ENCODE measurements at regions of chrX and their contacts with region 1.

Region 1: GRCh38 chrX:132940727-132941327 is 17.6 kb downstream of the HS6ST2 start:
- DNase-seq: no peak
- H3K4me3 ChIP-seq: no peak overlapping the region
- H3K27ac ChIP-seq: no peak overlapping the region
- H3K4me1 ChIP-seq: 0 out of 7 replicates have a peak, but pooled peaks cover 0 to 2% (median 0%) of the 10 kb centered on the region in 4 experiments
- H3K27me3 ChIP-seq: no peaks in the 10 kb centered on the region
- CTCF ChIP-seq: peak in 2 of 3 experiments; percentile 14 to 46; a peak in 2 of 4 replicates
- EP300 ChIP-seq: no peak
- POLR2A ChIP-seq: no peak
- RAD21 ChIP-seq: peak; percentile 22 to 42; a peak in 3 of 4 replicates

Region 2: DNA sequence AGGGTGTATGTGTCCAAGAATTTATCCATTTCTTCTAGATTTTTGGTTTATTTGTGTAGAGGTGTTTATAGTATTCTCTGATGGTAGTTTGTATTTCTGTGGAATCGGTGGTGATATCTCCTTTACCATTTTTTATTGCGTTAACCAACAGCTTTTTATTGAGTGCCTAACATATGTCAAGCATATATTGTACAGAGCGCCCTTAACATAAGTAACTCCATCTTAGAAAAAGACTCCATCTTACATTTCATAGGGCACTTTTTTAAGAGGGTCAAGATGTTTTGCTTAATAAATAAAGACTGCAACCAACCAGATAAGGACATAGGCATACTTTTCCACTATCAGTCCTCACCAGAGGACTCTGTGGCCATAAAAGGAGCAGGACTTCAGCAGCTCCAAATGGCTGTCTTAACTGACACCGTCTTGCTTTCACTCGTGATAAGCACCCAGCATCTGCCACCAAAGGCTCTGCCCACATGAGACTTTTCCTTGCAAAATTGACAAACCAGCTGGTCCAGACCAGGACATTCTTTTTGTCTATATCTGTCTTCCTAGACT is 57.4 kb before region 1 on chrX:
- CTCF ChIA-PET with region 1: no interaction called
- POLR2A ChIA-PET with region 1: no interaction called
- DNase-seq: no peak
- H3K4me3 ChIP-seq: no peak overlapping the region
- H3K27ac ChIP-seq: no peak overlapping the region
- H3K4me1 ChIP-seq: peaks cover 0 to 7% (median 2%) of the 10 kb centered on the region in 4 experiments; a peak in 2 of 7 replicates
- H3K27me3 ChIP-seq: no peaks in the 10 kb centered on the region
- CTCF ChIP-seq: no peak
- EP300 ChIP-seq: no peak
- POLR2A ChIP-seq: no peak
- RAD21 ChIP-seq: no peak

Region 3: GRCh38 chrX:132924426-132924825 is 16.4 kb before region 1 on chrX:
- CTCF ChIA-PET with region 1: interaction called, 15 read pairs
- POLR2A ChIA-PET with region 1: no interaction called
- DNase-seq: no peak
- H3K4me3 ChIP-seq: no peak overlapping the region
- H3K27ac ChIP-seq: no peak overlapping the region
- H3K4me1 ChIP-seq: no peaks in the 10 kb centered on the region; a peak in 1 of 7 replicates
- H3K27me3 ChIP-seq: no peaks in the 10 kb centered on the region
- CTCF ChIP-seq: no peak
- EP300 ChIP-seq: no peak
- POLR2A ChIP-seq: no peak
- RAD21 ChIP-seq: no peak